Posterior cingulate gyrus (tissue), 11 donors: ENCODE measurements at regions of chr19 and their contacts with region 1.

Region 1: DNA sequence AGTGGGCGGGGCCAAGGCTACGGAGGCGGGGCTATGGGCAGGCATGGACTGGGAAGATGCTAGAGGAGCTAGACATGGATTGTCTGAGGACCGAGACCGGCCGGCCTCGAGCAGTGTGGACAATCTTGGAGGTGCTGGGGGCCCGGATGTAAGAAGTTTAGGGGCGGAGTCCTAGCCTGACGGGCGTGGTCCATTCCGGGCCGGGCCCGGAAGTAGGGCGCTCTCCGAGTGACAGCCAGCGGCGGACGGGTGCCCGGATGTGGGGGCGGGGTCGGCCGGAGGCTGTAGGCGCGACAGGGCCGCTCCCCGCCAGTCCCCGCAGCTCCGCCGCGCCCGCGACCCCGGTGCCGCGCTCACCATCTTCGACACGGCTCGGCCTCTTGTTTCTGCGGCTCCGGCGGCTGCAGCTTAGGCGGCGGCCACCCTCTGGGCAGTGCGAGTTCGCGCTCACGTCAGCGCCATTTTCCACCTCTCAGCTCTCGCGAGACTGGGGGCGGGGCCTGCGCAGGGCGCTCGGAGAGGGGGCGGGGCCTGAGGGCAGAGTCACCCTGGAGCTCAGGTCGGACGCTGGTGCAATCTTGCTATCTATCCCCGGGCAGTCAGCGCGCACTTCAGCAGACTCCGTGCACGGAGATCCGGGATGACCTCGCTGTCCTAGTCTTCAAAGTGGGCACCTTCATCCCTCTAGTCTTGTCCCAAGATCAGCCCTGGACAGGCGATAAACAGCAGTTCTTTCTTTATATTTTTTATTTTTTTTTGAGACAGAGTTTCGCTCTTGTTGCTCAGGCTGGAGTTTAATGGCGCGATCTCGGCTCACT is at the start of gene ZNF414:
- DNase-seq: peak; percentile 86 to 99 (median 94)

Region 2: GRCh38 chr19:8473648-8474476 is 40.0 kb before region 1 on chr19:
- intact Hi-C with region 1: no loop called
- DNase-seq: no peak

Region 3: GRCh38 chr19:8525401-8525684 is 11.4 kb after region 1 on chr19:
- intact Hi-C with region 1: loop called (anchors 1 kb)
- DNase-seq: no peak

Region 4: GRCh38 chr19:8697671-8698432 is 184.0 kb after region 1 on chr19:
- intact Hi-C with region 1: no loop called
- DNase-seq: peak in 1 of 10 donors; percentile 33